Activated naive CD4-positive, alpha-beta T cell treated with anti-CD3 and anti-CD28 coated beads for 36 hours (primary cell): ENCODE measurements at regions of chr14 and their contacts with region 1.

Region 1: DNA sequence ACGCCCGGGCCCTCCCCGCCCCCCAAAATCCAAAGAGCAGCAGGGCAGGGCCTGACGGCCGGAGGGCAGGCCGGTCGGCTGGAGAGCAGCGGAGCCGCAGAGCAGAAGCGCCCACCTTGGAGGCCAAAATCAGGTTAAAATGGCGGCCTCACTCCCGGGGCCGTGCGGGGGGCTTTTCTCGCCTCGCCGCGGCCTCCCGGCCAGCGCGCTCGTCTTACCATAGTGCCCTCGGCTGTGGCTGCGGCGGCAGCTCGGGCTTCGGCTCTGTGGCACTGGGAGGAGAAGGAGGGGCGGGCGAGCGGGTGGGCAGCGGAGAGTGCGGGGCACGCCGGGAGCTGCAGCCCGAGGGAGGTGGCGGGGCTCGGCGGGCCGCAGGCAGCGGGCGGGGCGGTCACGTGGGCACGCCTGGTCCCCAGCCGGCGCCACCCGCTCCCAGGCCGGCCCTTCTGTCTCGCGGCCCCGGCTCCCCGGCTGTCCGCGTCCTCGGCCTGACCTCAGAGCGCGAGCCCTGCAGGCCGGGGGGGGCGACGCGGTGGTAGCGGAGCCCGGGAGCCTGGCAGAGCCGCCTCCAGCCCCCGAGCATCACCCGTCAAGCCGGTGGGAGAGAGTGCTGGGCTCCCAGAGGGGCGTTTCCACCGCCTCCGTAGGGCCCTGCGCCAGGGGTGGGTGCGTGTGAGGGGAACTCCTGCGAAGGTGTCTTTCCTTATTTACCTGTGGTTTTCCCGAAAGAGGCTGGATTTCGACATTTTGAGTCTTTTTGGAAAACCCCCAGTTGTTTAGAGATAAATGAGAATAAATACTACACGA is at the start of gene CFL2:
- DNase-seq: peak; percentile 75
- H3K4me3 Mint-ChIP-seq: peak within 1 kb of the TSS; percentile 81
- H3K27ac Mint-ChIP-seq: peak within 1 kb of the TSS; percentile 82
- H3K4me1 Mint-ChIP-seq: peaks cover 18% of the 10 kb centered on the region
- H3K27me3 Mint-ChIP-seq: no peaks in the 10 kb centered on the region
- total RNA-seq, gene CFL2: 3.1 to 4.5 TPM

Region 2: GRCh38 chr14:34355584-34356263 is 358.8 kb before region 1 on chr14:
- CTCF ChIA-PET with region 1: no interaction called
- intact Hi-C with region 1: no loop called
- DNase-seq: no peak
- H3K4me3 Mint-ChIP-seq: no peak overlapping the region
- H3K27ac Mint-ChIP-seq: no peak overlapping the region
- H3K4me1 Mint-ChIP-seq: no peaks in the 10 kb centered on the region
- H3K27me3 Mint-ChIP-seq: no peaks in the 10 kb centered on the region

Region 3: DNA sequence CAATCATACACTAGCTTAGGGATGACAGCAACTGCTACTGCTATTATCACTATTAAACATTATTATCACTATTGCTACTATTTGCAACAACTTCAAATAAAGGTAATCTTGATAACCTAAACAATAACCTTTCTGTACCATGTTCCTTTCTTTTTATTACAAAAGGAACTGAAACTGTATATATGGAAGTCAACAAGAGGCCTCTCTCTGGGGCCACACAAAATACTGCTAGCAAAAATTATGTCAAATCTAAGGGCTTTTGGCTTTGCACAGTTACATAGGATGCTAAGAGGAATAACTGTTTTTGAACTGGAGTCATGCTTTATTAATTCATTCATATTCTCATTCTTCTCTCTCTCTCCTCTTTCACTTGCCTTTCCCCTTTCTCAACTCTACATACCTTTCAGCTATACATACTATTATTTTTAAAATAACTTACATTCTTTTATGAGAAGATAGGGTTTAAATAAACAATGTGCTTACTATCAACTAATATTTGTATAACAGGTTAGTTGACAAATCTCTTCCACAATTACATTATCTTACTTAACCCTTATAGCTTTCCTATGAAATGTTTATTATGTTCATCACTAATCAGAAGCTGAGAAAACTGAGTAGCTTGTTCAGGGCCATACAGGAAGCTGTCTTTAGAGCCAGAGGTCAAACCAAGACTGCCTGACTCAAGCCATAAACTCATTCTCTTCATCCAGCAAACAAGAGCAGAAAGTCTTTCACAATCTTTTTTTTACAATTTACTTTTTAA is 278.2 kb before region 1 on chr14:
- CTCF ChIA-PET with region 1: no interaction called
- intact Hi-C with region 1: no loop called
- DNase-seq: no peak
- H3K4me3 Mint-ChIP-seq: no peak overlapping the region
- H3K27ac Mint-ChIP-seq: no peak overlapping the region
- H3K4me1 Mint-ChIP-seq: no peaks in the 10 kb centered on the region
- H3K27me3 Mint-ChIP-seq: no peaks in the 10 kb centered on the region

Region 4: DNA sequence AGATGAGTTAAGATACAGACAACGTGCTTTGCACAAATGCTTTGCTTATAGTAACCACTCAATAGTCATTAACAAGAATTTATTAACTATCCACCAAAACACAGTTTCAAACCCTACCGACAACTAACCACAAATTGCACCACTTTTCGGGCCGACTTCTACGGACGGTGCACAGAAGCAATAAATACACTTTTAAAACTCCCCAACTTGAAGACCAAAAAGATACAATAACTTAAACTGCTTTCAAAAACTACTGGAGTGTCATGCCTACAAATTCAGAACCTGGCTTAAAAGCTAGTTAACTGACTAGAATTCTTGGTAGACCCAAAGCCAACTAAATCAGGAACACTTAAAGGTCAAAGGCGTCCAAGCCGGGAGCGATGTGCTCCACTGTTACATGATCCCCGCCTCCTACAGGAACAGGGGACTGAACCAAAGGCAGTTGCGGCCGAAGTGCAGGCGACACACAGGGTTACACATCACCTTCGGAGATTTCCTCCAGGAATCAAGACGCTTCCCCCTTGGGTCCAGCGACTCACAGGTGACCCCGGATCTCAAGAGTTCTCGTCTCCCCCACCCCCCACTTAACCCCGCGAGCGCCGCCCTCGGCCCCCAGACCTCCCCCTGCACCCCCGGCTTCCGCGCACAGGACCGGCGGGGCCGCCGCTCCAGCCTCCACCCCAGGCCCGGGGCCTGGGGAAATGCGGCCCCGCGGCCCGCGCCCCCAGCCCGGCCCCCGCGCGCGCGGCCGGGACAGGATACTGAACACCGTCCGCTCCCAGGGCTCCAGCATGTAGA is 253.0 kb before region 1 on chr14:
- CTCF ChIA-PET with region 1: no interaction called
- intact Hi-C with region 1: loop called (anchors 5 kb)
- DNase-seq: peak; percentile 41
- H3K4me3 Mint-ChIP-seq: peak overlapping the region; percentile 87
- H3K27ac Mint-ChIP-seq: peak overlapping the region; percentile 65
- H3K4me1 Mint-ChIP-seq: peaks cover 16% of the 10 kb centered on the region
- H3K27me3 Mint-ChIP-seq: no peaks in the 10 kb centered on the region

Region 5: GRCh38 chr14:34582117-34582680 is 132.3 kb before region 1 on chr14:
- CTCF ChIA-PET with region 1: no interaction called
- intact Hi-C with region 1: loop called (anchors 5 kb)
- DNase-seq: no peak
- H3K4me3 Mint-ChIP-seq: no peak overlapping the region
- H3K27ac Mint-ChIP-seq: no peak overlapping the region
- H3K4me1 Mint-ChIP-seq: peaks cover 3% of the 10 kb centered on the region
- H3K27me3 Mint-ChIP-seq: no peaks in the 10 kb centered on the region

Region 6: DNA sequence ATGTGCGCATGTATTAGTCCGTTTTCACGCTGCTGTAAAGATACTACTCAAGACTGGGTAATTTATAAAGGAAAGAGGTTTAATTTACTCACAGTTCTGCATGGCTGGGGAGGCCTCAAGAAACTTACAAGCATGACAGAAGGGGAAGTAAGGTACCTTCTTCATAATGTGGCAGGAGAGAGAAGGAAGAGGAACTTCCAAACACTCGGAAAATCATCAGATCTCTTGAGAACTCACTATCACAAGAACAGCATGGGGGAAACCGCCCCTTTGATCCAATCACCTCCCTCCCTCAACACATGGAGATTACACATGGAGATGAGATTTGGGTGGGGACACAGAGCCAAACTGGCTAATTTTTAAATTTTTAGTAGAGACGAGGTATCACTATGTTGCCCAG is 42.8 kb before region 1 on chr14:
- CTCF ChIA-PET with region 1: interaction called, 12 read pairs
- intact Hi-C with region 1: loop called (anchors 2 kb)
- DNase-seq: no peak
- H3K4me3 Mint-ChIP-seq: no peak overlapping the region
- H3K27ac Mint-ChIP-seq: no peak overlapping the region
- H3K4me1 Mint-ChIP-seq: no peaks in the 10 kb centered on the region
- H3K27me3 Mint-ChIP-seq: no peaks in the 10 kb centered on the region

Region 7: DNA sequence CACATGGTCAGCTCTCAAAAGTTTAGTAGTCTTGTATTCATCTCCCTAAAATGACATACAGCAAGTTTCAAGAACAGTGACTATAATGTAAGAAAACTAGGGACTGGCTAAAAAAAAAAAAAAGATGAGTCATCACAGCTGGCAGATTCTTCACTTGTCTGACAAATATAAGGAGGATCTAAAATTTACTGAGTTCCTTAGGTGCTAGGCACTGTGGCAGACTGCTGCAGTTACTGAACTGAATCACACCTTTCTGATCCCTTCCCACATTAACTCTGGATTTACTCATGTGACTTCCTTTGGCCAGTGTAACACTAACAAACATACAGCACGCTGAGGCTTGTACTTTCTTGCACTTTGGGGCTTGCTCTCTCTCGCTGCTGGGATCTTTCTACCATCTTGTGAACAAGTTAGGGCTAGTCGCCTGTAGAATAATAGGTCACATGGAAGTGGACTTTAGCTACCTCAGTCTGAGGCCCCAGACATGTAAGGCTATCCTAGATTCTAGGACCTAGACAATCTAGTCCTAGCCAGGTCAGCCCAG is 128.6 kb after region 1 on chr14:
- CTCF ChIA-PET with region 1: no interaction called
- intact Hi-C with region 1: loop called (anchors 1 kb)
- DNase-seq: peak; percentile 59
- H3K4me3 Mint-ChIP-seq: no peak overlapping the region
- H3K27ac Mint-ChIP-seq: peak overlapping the region; percentile 89
- H3K4me1 Mint-ChIP-seq: peaks cover 30% of the 10 kb centered on the region
- H3K27me3 Mint-ChIP-seq: no peaks in the 10 kb centered on the region